Activated CD4-positive, alpha-beta memory T cell treated with anti-CD3 and anti-CD28 coated beads for 36 hours (primary cell): ENCODE measurements at regions of chr2 and their contacts with region 1.

Region 1: DNA sequence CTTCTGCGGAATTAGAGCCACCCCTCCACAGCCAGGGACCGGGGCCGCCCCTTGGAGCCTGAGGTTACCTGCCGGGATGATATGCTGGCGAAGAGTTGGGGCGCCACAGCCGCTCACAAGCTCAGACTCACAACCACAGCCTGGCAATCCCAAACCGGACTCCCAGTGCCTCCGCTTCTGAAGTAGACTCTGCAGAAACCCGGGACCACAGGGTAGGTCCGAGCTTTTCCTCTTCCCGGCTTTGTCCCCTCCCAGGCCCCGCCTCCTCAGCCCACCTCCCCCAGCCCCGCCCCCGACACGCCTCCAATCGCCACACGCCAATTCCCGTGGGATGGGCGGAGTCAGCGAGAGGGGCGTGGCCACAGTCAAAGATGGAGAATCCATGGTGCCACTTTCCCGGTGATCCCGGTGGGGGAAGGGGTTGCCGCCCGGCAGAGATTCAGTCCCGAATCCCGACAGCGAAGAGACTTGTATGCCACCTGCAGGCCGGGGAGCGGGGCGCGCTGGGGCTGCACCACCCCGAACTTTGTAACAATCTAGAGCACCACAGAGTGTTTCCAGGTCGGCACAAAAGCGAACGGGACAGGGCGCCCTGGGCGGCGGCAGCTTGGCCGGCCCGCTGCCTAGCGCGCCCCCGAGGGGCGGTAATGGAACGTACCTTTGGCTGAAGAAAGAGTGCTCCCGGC is at the start of gene IDH1:
- DNase-seq: peak; percentile 95
- H3K4me3 Mint-ChIP-seq: peak within 1 kb of the TSS; percentile 97
- H3K27ac Mint-ChIP-seq: peak within 1 kb of the TSS; percentile 81
- H3K4me1 Mint-ChIP-seq: peaks cover 15% of the 10 kb centered on the region
- H3K27me3 Mint-ChIP-seq: no peaks in the 10 kb centered on the region
- total RNA-seq, gene IDH1: 30.9 to 32.9 TPM

Region 2: GRCh38 chr2:206274434-206275268 is 1980.4 kb before region 1 on chr2 and contains the start of gene ZDBF2:
- CTCF ChIA-PET with region 1: no interaction called
- POLR2A ChIA-PET with region 1: no interaction called
- intact Hi-C with region 1: loop called (anchors 5 kb)
- DNase-seq: peak; percentile 60
- H3K4me3 Mint-ChIP-seq: peak within 1 kb of the TSS; percentile 80
- H3K27ac Mint-ChIP-seq: peak within 1 kb of the TSS; percentile 73
- H3K4me1 Mint-ChIP-seq: peaks cover 21% of the 10 kb centered on the region
- H3K27me3 Mint-ChIP-seq: peaks cover 42% of the 10 kb centered on the region
- total RNA-seq, gene ZDBF2: 7.4 to 7.8 TPM

Region 3: DNA sequence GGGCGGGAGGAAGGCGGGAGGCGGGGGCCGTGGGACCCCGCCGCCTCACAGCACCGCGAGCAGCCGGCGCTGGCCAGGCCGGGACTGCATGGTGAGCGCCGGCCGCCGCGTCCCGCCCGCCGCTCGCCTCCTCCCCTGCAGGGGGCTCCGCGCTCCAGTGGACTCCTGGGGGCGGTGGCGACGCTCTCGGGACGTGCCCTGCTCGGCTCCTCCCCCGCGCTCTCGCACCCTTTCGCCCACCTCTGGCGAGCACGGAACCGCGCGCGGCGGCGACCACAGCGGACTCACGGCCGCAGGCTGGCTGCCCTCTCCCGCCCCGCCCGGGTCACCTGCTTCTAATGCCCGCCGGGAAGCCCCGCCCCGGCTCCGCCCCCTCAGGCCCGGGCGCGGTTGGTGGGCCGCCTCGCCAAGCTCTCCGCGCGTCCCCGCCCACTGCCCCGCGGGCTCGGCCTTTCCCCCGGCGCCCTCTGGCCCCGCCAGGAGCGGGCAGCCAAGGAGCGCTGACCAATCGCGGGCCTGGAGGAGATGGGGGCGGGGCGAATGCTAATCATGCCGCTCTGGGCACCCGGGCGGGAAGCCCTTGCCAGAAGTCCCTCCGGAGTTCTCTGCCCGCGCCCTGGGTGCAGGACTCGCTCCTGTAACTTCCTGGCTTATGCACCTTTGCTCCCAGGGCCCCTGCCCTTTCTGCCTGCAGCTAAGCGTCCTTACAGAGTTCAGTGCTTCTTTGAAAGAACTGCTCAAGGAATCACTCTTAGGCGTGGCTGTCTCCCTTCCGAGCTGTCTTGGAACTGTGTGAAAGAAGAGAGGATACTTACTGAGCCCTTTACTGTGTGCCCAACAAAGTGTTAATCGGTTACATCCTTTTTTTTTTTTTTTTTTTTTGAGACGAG is 485.2 kb before region 1 on chr2 and contains the start of gene FZD5:
- CTCF ChIA-PET with region 1: no interaction called
- POLR2A ChIA-PET with region 1: no interaction called
- intact Hi-C with region 1: loop called (anchors 1 kb)
- DNase-seq: peak; percentile 92
- H3K4me3 Mint-ChIP-seq: peak within 1 kb of the TSS; percentile 78
- H3K27ac Mint-ChIP-seq: no peak within 1 kb of the TSS
- H3K4me1 Mint-ChIP-seq: peaks cover 31% of the 10 kb centered on the region
- H3K27me3 Mint-ChIP-seq: peaks cover 30% of the 10 kb centered on the region
- total RNA-seq, gene FZD5: 1.3 to 1.7 TPM

Region 4: DNA sequence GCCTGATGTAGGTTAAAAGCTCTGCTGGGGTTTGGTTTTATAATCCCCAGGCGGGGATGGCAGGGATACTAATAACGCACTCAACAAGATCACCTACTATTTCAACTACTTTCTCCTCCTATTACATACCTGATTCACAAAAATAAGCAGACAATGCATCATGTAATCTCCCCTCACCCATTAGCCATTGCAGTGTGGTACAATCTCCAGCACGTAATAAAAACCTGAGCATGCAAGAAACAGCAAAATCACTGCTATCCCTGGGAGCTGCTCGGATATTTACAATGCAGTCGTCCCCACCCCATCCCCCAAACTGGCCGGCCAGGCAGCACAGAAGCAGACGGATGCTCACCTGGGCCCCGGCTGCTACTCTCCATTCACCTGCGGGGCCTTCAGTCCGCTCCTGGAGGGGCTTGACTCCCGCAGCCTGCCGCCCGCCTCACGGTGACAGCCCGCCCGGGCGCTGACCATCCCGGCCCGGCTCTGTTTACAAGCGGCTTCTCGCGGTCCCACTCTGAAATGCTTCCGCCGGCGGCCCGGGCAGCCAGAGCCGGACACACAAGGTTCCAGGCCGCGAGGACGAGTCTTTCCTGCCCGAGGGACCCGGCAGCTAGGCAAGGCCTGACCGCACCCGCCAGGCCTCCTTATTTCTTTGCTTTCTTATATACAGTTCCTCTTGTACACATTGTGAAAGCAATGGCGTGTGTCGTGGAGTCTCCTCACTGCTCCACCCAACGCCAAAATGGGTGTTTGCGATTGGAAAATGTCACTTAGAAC is 229.8 kb before region 1 on chr2 and contains the start of gene PLEKHM3:
- CTCF ChIA-PET with region 1: no interaction called
- POLR2A ChIA-PET with region 1: no interaction called
- intact Hi-C with region 1: loop called (anchors 2 kb)
- DNase-seq: peak; percentile 86
- H3K4me3 Mint-ChIP-seq: peak within 1 kb of the TSS; percentile 90
- H3K27ac Mint-ChIP-seq: peak within 1 kb of the TSS; percentile 90
- H3K4me1 Mint-ChIP-seq: peaks cover 14% of the 10 kb centered on the region
- H3K27me3 Mint-ChIP-seq: no peaks in the 10 kb centered on the region
- total RNA-seq, gene PLEKHM3: 4.5 to 5.5 TPM

Region 5: DNA sequence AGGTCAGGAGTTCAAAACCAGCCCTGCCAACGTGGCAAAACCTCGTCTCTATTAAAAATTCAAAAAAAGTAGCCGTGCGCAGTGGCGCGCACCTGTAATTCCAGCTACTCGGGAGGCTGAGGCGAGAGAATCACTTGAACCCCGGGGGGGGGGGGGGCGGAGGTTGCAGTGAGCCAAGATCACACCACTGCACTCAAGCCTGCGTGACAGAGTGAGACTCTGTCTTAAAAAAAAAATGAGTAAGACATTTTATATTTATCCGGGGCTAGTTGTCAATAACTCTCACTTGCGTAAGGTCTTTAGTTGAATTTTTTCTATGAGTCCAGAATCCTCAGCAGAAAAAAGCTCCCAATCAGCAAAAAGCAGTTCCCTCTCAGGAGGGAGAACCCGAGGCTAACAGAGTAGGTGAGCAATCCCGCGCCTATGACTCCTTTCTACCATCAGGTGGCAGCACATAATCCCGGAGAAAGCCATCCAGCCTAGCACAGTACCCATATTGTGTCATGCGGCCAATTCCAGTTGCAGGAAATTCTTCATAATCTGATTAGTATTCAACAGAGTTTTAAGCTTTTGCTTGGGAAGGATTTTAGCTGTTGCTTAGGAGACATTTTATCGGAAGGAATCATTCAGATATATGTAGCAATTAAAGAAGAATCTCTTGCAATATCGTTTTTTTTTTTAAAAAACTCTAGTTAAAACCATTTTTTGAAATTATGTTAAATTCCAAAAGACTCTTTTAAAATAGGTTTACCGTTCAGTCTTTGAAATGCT is 79.8 kb before region 1 on chr2:
- CTCF ChIA-PET with region 1: interaction called, 47 read pairs
- POLR2A ChIA-PET with region 1: interaction called, 3 read pairs
- intact Hi-C with region 1: loop called (anchors 1 kb)
- DNase-seq: peak; percentile 73
- H3K4me3 Mint-ChIP-seq: no peak overlapping the region
- H3K27ac Mint-ChIP-seq: no peak overlapping the region
- H3K4me1 Mint-ChIP-seq: no peaks in the 10 kb centered on the region
- H3K27me3 Mint-ChIP-seq: peaks cover 12% of the 10 kb centered on the region

Region 6: DNA sequence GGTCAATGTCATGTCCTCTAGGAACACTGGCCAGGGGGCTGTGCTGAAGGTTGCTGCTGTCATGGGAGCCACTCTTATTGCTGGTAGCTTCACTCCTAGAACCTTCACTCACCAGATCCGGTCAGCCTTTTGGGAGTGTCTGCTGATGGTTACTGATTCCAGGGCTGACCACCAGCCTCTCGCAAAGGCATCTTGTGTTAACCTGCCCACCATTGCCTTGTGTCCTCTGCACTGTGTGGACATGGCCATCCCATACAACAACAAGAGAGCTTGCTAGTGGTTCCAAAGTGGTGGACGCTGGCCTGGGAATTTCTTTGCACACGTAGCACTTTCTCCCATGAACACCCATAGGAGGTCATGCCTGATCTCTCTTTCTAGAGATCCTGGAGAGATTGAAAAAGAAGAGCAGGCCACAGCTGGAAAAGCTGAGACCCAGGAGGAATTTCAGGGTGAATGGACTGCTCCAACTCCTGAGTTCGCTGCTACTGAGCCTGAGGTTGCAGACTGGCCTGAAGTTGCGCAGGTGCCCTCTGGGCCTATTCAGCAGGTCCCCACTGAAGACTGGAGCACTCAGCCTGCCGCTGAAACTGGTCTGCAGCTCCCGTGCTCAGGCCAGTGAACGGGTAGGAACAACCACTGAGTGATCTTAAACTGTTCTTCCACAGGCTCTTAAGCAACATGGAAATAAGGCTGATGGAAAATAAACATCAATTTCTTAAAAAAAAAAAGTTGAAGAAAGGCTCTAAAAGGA is 46.5 kb before region 1 on chr2:
- CTCF ChIA-PET with region 1: no interaction called
- POLR2A ChIA-PET with region 1: no interaction called
- intact Hi-C with region 1: no loop called
- DNase-seq: no peak
- H3K4me3 Mint-ChIP-seq: no peak overlapping the region
- H3K27ac Mint-ChIP-seq: no peak overlapping the region
- H3K4me1 Mint-ChIP-seq: peaks cover 5% of the 10 kb centered on the region
- H3K27me3 Mint-ChIP-seq: no peaks in the 10 kb centered on the region

Region 7: DNA sequence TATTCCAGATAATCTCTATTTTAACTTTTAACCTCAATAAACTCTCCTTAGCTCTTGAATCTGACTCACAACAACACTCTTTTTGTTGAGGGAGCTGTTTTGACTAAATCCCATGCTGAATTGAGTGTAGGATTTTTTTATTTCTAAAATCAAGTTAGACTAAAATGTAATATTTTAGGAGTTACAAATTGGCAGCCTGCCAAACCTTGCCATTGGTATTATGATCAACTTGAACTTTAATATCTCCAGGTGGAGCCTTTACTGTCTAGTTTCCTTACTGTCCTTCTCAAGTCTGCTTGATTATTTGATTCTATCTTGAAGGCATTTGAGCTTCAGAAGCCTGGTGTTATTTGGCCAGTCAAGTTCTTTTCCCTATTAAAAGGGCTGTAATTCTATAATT is 19.7 kb after region 1 on chr2:
- CTCF ChIA-PET with region 1: interaction called, 99 read pairs
- POLR2A ChIA-PET with region 1: no interaction called
- intact Hi-C with region 1: no loop called
- DNase-seq: no peak
- H3K4me3 Mint-ChIP-seq: no peak overlapping the region
- H3K27ac Mint-ChIP-seq: no peak overlapping the region
- H3K4me1 Mint-ChIP-seq: peaks cover 20% of the 10 kb centered on the region
- H3K27me3 Mint-ChIP-seq: no peaks in the 10 kb centered on the region

Region 8: GRCh38 chr2:208311954-208312353 is 56.9 kb after region 1 on chr2:
- CTCF ChIA-PET with region 1: interaction called, 5 read pairs
- POLR2A ChIA-PET with region 1: no interaction called
- intact Hi-C with region 1: loop called (anchors 2 kb)
- DNase-seq: no peak
- H3K4me3 Mint-ChIP-seq: no peak overlapping the region
- H3K27ac Mint-ChIP-seq: peak overlapping the region; percentile 21
- H3K4me1 Mint-ChIP-seq: peaks cover 21% of the 10 kb centered on the region
- H3K27me3 Mint-ChIP-seq: no peaks in the 10 kb centered on the region